Dorsolateral prefrontal cortex (tissue), 120 donors: ENCODE measurements at regions of chr4 and their contacts with region 1.

Region 1: DNA sequence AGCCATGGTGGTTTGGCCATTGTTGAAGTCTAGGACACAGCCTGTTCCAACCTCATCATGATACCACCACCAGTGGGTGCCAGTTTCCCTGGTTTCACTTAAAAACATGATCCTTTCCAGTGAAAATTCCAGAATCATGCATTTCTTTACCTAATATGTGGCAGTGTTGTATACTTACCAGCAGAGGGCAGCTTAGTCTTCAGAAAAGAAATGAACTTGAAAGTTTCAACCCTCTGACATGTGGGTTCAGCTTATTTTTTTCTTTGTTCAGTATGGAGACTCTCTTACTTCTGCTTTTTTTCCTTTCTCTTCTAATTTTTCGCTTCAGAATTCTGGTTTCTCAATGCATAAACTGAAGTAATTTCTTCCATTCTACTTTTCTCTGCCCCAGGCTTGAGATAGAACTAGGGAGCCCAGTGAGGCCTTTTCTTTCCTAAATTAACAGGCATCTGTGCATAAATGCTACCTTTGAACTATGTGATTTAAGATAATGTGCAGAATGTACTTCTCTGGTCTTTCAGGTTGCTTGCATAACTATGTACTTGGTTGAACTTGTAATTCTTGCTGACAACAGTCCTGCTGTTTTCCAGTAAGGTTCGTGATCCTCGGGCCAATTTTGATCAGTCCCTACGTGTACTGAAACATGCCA is 10.7 kb downstream of the LIAS start:
- DNase-seq: peak in 4 of 10 donors; percentile 15 to 40 (median 24)
- H3K4me3 ChIP-seq: peak overlapping the region in 10 of 59 donors; percentile 1 to 28 (median 6)
- H3K27ac ChIP-seq: peak overlapping the region; percentile 17 to 99 (median 84)
- H3K27me3 ChIP-seq: no peaks in the 10 kb centered on the region
- CTCF ChIP-seq: peak; percentile 81 to 97 (median 92)

Region 2: DNA sequence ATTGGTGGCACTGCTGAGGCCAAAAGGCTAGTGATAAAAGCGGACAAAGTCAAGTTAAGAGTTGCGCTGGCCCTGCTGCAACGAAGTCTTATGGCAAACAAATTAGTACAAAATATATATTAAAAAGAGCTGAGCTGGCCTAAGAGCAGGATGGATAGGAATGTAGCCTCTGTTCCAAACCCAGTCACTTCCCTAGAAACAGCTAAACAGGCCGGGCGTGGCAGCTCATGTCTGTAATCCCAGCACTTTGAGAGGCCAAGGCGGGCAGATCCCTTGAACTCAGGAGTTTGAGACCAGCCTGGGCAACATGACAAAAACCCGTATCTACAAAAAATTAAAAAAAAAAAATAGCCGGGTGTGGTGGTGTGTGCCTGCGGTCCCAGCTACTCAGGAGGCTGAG is 90.1 kb after region 1 on chr4:
- intact Hi-C with region 1: no loop called
- DNase-seq: no peak
- H3K4me3 ChIP-seq: no peak overlapping the region
- H3K27ac ChIP-seq: no peak overlapping the region
- H3K27me3 ChIP-seq: no peaks in the 10 kb centered on the region
- CTCF ChIP-seq: no peak

Region 3: GRCh38 chr4:39977489-39978377 is 508.2 kb after region 1 on chr4 and contains the start of gene PDS5A:
- intact Hi-C with region 1: loop called (anchors 1 to 5 kb)
- DNase-seq: peak; percentile 67 to 89 (median 81)
- H3K4me3 ChIP-seq: peak within 1 kb of the TSS; percentile 62 to 98 (median 93)
- H3K27ac ChIP-seq: peak within 1 kb of the TSS; percentile 84 to 98 (median 95)
- H3K27me3 ChIP-seq: no peaks in the 10 kb centered on the region
- CTCF ChIP-seq: peak; percentile 54 to 93 (median 80)
- total RNA-seq, gene PDS5A: 43.7 to 92.5 (median 61.9) TPM